ENCODE measurements at regions of chr17 and their contacts with region 1.

Region 1: DNA sequence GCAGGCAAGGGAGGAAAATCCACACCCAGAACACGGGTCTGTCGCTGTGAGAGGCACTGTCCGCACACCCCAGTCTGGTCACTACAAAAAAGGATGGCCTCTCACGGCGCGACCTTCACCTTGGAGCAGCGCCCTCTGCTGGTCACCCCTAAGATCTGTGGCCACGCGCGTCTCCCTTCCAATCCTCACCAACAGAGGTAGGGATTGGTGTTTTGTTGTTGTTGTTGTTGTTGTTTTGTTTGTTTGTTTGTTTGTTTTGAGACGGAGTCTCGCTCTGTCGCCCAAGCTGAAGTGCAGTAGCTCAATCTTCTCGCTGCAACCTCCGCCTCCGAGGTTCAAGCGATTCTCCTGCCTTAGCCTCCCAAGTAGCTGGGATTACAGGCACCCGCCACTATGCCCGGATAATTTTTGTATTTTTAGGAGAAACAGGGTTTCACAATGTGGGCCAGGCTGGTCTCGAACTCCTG is 15.0 kb upstream of the C17orf58 start:
- DNase-seq: peak; percentile 26
- H3K4me3 ChIP-seq: no peak overlapping the region
- H3K27ac ChIP-seq: no peak overlapping the region
- H3K4me1 ChIP-seq: no peaks in the 10 kb centered on the region
- H3K27me3 ChIP-seq: peaks cover 0 to 5% of the 10 kb centered on the region in 2 experiments
- CTCF ChIP-seq: peak; percentile 66 to 76
- POLR2A ChIP-seq: no peak

Region 2: GRCh38 chr17:67959288-67959900 is 51.8 kb before region 1 on chr17:
- CTCF ChIA-PET with region 1: interaction called, 3 read pairs
- POLR2A ChIA-PET with region 1: no interaction called
- dilution Hi-C with region 1: no loop called
- intact Hi-C with region 1: loop called (anchors 1 kb)
- DNase-seq: no peak
- H3K4me3 ChIP-seq: no peak overlapping the region
- H3K27ac ChIP-seq: no peak overlapping the region
- H3K4me1 ChIP-seq: peaks cover 2% of the 10 kb centered on the region
- H3K27me3 ChIP-seq: no peaks in the 10 kb centered on the region
- CTCF ChIP-seq: no peak
- POLR2A ChIP-seq: no peak

Region 3: DNA sequence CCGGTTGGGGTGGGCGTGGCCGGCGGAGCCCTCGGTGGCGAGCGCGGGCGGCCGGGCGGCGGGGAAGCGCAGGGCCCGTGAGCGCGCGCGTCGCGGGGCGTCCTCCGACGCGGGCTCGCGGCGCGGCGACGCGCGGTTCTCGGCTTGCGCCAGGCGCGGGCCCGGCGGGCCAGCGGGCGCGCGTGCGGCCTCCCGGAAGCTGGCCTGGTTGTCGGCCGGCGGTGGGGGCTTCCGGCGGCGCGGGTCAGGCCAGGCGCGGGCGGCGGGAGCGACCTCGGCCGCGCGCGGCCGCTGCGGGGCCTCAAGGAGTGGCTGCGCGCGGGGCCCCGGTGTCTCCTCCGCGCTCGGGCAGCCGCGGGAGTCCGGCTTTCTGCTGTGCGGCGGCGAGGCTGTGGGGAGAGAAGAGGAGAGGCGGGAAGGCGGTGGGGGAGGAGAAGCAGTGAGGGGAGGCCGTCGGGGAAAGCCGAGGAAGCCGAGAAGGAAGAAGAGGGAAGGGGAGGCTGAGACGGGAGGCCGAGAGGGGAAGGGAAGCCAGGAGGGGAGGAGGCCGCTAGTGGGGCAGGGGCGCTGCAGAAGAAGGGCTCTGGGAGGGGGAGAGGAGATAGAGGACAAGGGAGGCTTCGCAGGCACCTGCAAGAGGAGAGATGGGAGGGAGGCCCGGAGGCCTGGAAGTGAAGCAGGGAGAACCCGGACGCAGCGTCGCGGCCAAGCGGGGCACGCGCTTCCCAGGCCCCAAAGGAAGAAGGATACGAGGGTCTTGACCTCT is 17.5 kb before region 1 on chr17:
- CTCF ChIA-PET with region 1: interaction called, 11 read pairs
- POLR2A ChIA-PET with region 1: no interaction called
- dilution Hi-C with region 1: no loop called
- intact Hi-C with region 1: loop called (anchors 1 kb)
- DNase-seq: peak; percentile 74
- H3K4me3 ChIP-seq: peak overlapping the region; percentile 18 to 55 (median 50)
- H3K27ac ChIP-seq: peak overlapping the region; percentile 60
- H3K4me1 ChIP-seq: peaks cover 19% of the 10 kb centered on the region
- H3K27me3 ChIP-seq: no peaks in the 10 kb centered on the region
- CTCF ChIP-seq: no peak
- POLR2A ChIP-seq: no peak

Region 4: DNA sequence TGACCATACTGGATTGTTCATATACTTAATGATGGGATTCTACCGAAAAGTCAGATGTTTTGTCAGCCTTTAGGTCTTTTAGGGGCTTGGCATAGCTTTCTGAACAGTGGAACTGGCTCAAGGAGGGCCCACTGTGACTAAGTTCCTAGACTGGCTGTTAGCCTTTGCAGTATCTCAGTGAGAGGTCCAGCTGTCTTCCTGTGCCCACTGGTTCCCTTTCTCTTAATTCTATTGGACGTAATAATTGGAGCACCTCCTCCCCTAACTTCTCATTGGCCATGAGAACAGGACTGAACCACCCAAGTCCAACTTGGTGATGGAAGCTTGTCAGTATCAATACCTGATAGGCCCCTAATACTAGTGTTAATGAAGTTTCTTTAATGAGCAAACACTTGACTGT is 37.8 kb after region 1 on chr17:
- CTCF ChIA-PET with region 1: no interaction called
- POLR2A ChIA-PET with region 1: no interaction called
- dilution Hi-C with region 1: no loop called
- intact Hi-C with region 1: no loop called
- DNase-seq: peak; percentile 23
- H3K4me3 ChIP-seq: no peak overlapping the region
- H3K27ac ChIP-seq: no peak overlapping the region
- H3K4me1 ChIP-seq: peaks cover 13% of the 10 kb centered on the region
- H3K27me3 ChIP-seq: no peaks in the 10 kb centered on the region
- CTCF ChIP-seq: no peak
- POLR2A ChIP-seq: no peak